Activated T-helper 1 cell treated with anti-CD3 and anti-CD28 coated beads, Interleukin-12 subunit alpha, Interleukin-12 subunit beta, Interleukin-2, Interleukin-4 antibody, amounts not matched to agents 30 ng/mL and 10 ng/mL and 1 ng/mL, durations not matched to agents 14 hours and 24 hours and 36 hours (primary cell): ENCODE measurements at regions of chr2 and their contacts with region 1.

Region 1: DNA sequence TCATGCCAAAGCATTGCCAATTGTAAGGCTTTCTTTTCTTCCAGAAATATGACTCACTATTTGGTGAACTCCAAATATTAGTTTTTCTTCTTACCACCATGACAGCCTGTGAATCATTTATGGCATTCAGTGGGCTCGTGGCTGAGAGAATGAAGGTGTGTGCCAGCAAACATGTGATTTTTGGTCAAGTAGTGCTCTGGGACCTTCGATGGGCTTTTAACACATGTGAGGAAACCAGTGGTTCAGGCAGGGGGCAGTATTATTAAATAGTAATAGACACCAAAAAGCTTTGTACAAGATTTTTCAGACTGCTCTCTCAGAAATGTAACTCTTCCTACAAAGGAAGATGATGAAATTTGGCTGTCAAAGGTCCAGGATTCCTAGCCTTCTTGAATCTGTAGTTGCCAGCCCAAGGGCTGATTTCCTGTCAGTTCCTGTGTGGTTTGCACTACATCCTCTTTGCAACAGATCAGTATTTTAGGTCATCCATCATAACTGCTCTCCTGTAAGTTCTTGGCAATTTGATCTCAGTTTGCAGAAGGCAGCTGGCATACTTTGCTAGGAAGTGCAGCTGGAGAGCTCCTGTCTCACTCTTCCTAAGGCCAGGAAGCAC is 64.3 kb downstream of the BABAM2 start:
- DNase-seq: peak; percentile 21
- H3K4me3 Mint-ChIP-seq: peak overlapping the region; percentile 49
- H3K27ac Mint-ChIP-seq: peak overlapping the region; percentile 65
- H3K4me1 Mint-ChIP-seq: peaks cover 80% of the 10 kb centered on the region
- H3K27me3 Mint-ChIP-seq: no peaks in the 10 kb centered on the region

Region 2: DNA sequence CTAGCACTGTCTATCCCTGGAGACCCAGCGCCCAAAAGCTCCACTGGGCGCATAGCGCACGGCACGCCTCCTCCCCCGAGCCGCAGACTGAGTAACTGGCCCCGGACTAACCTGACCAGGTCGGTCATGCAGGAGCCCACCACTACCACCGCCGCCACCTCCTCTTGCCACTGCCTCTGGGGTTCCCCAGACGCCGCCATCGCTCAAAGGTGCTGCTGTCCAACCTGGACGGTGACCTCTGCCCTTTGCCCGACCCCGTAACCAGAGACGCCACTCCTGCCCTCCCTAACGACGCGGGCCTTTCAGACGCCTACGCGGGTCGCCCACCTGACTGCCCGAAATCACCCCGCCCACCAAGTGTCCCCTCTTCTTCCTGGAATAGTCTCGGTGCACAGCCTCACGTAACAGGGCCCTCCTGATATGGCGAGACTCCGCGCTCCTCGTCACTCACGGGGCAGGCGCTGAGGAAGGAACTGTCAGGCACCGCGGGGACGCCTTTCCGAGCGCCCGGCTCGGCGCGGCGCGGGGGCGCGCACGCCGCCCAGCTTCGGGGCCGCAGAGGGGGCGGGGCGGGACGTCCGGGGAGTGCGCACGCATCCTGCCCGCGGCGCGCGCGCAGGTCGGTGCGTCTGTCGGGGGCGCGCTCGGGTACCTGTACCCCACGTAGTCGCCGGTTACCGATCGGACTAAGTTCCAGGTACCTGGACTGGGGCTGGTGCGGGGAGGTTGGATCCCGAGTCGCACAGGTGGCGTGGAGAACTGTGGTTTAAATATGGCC is 64.5 kb before region 1 on chr2 and contains the starts of genes BABAM2 and RBKS:
- intact Hi-C with region 1: loop called (anchors 1 kb)
- DNase-seq: peak; percentile 88
- H3K4me3 Mint-ChIP-seq: peak within 1 kb of the TSS; percentile 93
- H3K27ac Mint-ChIP-seq: peak within 1 kb of the TSS; percentile 99
- H3K4me1 Mint-ChIP-seq: peaks cover 62% of the 10 kb centered on the region
- H3K27me3 Mint-ChIP-seq: no peaks in the 10 kb centered on the region
- total RNA-seq, gene BABAM2: 46.3 and 46.6 TPM in 2 replicates
- total RNA-seq, gene RBKS: 0.76 and 0.83 TPM in 2 replicates

Region 3: GRCh38 chr2:27966483-27966882 is 11.6 kb after region 1 on chr2:
- intact Hi-C with region 1: loop called (anchors 1 kb)
- DNase-seq: no peak
- H3K4me3 Mint-ChIP-seq: no peak overlapping the region
- H3K27ac Mint-ChIP-seq: no peak overlapping the region
- H3K4me1 Mint-ChIP-seq: peaks cover 57% of the 10 kb centered on the region
- H3K27me3 Mint-ChIP-seq: no peaks in the 10 kb centered on the region

Region 4: DNA sequence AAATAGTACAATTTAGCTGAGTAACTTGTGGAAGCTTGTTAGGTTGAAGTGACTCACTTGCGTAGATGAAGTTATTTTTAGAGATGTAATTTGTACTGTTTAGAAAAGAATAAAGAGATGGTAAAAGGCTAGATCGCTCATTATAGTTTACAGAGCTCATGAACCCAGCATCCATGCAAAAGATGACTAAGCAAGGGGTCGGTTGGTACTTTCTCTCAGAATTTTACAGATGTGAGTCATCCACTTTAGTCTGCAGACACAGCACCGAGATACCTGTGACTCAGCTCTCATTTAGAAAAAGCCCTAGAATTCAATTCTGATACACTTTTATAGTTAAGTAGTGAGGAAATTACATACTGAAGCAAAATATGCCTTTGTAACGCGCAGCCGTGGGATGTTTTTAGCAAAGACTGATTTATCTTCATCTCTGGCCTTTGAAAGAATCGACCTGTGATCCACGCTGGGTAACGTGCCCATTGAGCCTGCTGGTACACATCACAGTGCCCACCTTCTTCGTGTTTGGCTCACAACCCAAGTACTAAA is 321.3 kb after region 1 on chr2:
- intact Hi-C with region 1: loop called (anchors 5 kb)
- DNase-seq: no peak
- H3K4me3 Mint-ChIP-seq: peak overlapping the region; percentile 41
- H3K27ac Mint-ChIP-seq: peak overlapping the region; percentile 30
- H3K4me1 Mint-ChIP-seq: peaks cover 61% of the 10 kb centered on the region
- H3K27me3 Mint-ChIP-seq: peaks cover 6% of the 10 kb centered on the region